Lower leg skin (tissue), 4 donors: ENCODE measurements at regions of chr13 and their contacts with region 1.

Region 1: DNA sequence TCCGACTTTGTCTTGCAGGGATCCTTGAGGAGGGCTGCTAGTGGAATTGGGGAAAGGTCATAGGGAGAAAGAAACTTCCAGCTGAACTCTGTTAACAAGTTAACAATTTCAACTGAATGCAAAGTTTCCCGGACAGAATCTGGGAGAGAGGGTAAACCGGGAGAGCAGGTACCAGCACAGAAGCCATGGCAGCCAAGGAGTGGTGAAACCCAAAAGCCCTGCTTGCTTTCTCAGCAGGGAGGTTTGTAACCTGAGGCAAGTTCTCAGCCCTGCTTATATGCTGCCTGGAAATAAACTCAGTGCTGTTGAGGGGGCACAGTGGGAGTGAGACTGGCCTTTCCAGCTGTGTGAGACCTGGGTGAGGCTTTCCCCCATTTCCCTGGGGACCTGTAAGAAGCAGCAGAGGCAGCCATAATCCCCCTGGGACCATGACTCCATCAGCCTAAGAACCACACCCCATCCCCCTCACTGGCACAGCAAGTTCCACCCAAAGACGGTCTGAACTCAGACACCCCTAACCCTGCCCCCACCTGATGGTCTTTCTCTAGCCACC is 84.0 kb downstream of the SUCLA2 start:
- DNase-seq: no peak
- H3K4me3 ChIP-seq: no peak overlapping the region
- CTCF ChIP-seq: no peak
- POLR2A ChIP-seq: no peak

Region 2: DNA sequence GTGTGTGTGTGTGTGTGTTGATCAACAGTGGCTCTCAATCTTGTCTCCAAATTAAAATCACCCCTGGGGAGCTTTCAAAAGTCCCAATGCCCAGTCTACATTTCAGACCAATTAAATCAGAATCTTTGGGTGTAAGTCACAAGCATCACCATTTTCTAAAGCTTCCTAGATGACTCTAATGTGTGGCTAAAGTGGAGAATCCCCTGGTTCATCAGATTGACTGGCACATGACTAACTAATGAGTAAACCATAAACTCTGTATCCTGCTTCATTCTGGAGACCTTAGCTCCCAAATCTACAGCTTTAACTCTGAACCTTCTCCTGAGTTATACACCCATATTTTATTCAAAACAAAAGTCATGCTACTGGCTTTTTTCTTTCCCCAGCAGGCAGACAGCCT is 47.3 kb before region 1 on chr13:
- intact Hi-C with region 1: loop called (anchors 1 kb)
- DNase-seq: no peak
- H3K4me3 ChIP-seq: no peak overlapping the region
- CTCF ChIP-seq: no peak
- POLR2A ChIP-seq: no peak